Panc1 (cell line): ENCODE measurements at regions of chr3 and their contacts with region 1.

Region 1: DNA sequence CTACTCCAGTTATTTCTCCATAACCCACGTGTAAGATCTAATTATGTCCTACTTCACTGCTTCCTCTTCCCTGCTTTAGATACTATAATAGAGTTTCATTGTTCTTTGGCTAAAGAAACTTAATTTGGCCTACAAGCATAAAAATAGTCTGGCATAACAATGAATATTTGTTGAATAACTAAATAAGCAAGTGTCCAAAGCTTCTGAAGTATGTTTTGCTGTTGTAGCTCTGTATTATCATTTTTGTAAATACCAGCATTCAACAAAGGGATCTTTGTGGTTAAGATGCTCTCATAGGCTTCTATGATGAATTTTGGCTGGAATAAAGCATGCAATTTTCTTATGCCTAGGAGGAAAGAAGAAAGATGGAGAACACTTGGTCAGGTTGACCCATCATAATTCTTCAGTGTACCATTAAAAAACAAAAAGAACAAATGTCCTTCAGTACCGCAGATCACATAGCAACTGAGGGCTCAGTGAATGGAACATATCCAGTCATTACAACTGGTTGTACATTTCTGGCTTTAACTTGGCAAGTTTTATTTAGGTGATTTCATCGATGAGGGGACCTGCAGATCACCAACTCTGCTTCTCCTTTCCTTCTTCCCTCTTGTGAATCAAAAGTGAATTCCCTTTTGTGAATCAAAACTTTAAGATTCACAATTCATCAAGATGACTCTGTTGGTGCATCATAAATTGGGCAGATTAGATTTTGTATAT is 465.9 kb upstream of the TGFBR2 start:
- DNase-seq: no peak
- ATAC-seq: no peak
- H3K4me3 ChIP-seq: no peak overlapping the region
- H3K27ac ChIP-seq: no peak overlapping the region; the same call in 1 of the 2 replicates
- H3K4me1 ChIP-seq: no peaks in the 10 kb centered on the region
- H3K27me3 ChIP-seq: no peaks in the 10 kb centered on the region
- CTCF ChIP-seq: no peak

Region 2: GRCh38 chr3:30620402-30621360 is 480.2 kb after region 1 on chr3:
- CTCF ChIA-PET with region 1: interaction called, 10 read pairs
- POLR2A ChIA-PET with region 1: no interaction called
- in situ Hi-C with region 1: no loop called
- intact Hi-C with region 1: no loop called
- DNase-seq: no peak
- ATAC-seq: no peak
- H3K4me3 ChIP-seq: no peak overlapping the region
- H3K27ac ChIP-seq: no peak overlapping the region
- H3K4me1 ChIP-seq: peaks cover 19% of the 10 kb centered on the region
- H3K27me3 ChIP-seq: no peaks in the 10 kb centered on the region
- CTCF ChIP-seq: no peak